B cell (primary cell): ENCODE measurements at regions of chr10 and their contacts with region 1.

Region 1: GRCh38 chr10:14822879-14823755 is 14.7 kb downstream of the CDNF start:
- DNase-seq: peak; percentile 69
- ATAC-seq: peak; percentile 78
- H3K4me3 ChIP-seq: no peak overlapping the region
- H3K4me3 Mint-ChIP-seq: no peak overlapping the region
- H3K27ac ChIP-seq: no peak overlapping the region
- H3K27ac Mint-ChIP-seq: no peak overlapping the region
- H3K4me1 ChIP-seq: peaks cover 16 to 19% of the 10 kb centered on the region in 2 donors
- H3K4me1 Mint-ChIP-seq: peaks cover 32% of the 10 kb centered on the region
- H3K27me3 ChIP-seq: no peaks in the 10 kb centered on the region
- H3K27me3 Mint-ChIP-seq: no peaks in the 10 kb centered on the region
- CTCF ChIP-seq: peak; percentile 83

Region 2: GRCh38 chr10:14536241-14537213 is 286.6 kb before region 1 on chr10:
- CTCF ChIA-PET with region 1: interaction called, 71 read pairs
- POLR2A ChIA-PET with region 1: no interaction called
- intact Hi-C with region 1: loop called (anchors 1 kb)
- DNase-seq: peak; percentile 62
- ATAC-seq: no peak
- H3K4me3 ChIP-seq: no peak overlapping the region
- H3K4me3 Mint-ChIP-seq: no peak overlapping the region
- H3K27ac ChIP-seq: peak overlapping the region in 1 of 2 donors; percentile 48
- H3K27ac Mint-ChIP-seq: no peak overlapping the region
- H3K4me1 ChIP-seq: peaks cover 0 to 10% of the 10 kb centered on the region in 2 donors
- H3K4me1 Mint-ChIP-seq: peaks cover 59% of the 10 kb centered on the region
- H3K27me3 ChIP-seq: no peaks in the 10 kb centered on the region
- H3K27me3 Mint-ChIP-seq: no peaks in the 10 kb centered on the region
- CTCF ChIP-seq: peak; percentile 76

Region 3: GRCh38 chr10:14556285-14556956 is 266.7 kb before region 1 on chr10:
- CTCF ChIA-PET with region 1: interaction called, 12 read pairs
- POLR2A ChIA-PET with region 1: no interaction called
- intact Hi-C with region 1: no loop called
- DNase-seq: peak; percentile 68
- ATAC-seq: peak; percentile 60
- H3K4me3 ChIP-seq: peak overlapping the region in 1 of 5 experiments; percentile 5
- H3K4me3 Mint-ChIP-seq: peak overlapping the region; percentile 79
- H3K27ac ChIP-seq: peak overlapping the region; percentile 54 to 70
- H3K27ac Mint-ChIP-seq: peak overlapping the region; percentile 92
- H3K4me1 ChIP-seq: peaks cover 82 to 84% of the 10 kb centered on the region in 2 donors
- H3K4me1 Mint-ChIP-seq: peaks cover 92% of the 10 kb centered on the region
- H3K27me3 ChIP-seq: no peaks in the 10 kb centered on the region
- H3K27me3 Mint-ChIP-seq: no peaks in the 10 kb centered on the region
- CTCF ChIP-seq: peak; percentile 43

Region 4: GRCh38 chr10:14736600-14737081 is 86.5 kb before region 1 on chr10:
- CTCF ChIA-PET with region 1: interaction called, 21 read pairs
- POLR2A ChIA-PET with region 1: no interaction called
- intact Hi-C with region 1: no loop called
- DNase-seq: peak; percentile 76
- ATAC-seq: peak; percentile 78
- H3K4me3 ChIP-seq: peak overlapping the region in 1 of 5 experiments; percentile 6
- H3K4me3 Mint-ChIP-seq: peak overlapping the region; percentile 73
- H3K27ac ChIP-seq: peak overlapping the region; percentile 84
- H3K27ac Mint-ChIP-seq: peak overlapping the region; percentile 95
- H3K4me1 ChIP-seq: peaks cover 64 to 70% of the 10 kb centered on the region in 2 donors
- H3K4me1 Mint-ChIP-seq: peaks cover 68% of the 10 kb centered on the region
- H3K27me3 ChIP-seq: no peaks in the 10 kb centered on the region
- H3K27me3 Mint-ChIP-seq: no peaks in the 10 kb centered on the region
- CTCF ChIP-seq: no peak

Region 5: DNA sequence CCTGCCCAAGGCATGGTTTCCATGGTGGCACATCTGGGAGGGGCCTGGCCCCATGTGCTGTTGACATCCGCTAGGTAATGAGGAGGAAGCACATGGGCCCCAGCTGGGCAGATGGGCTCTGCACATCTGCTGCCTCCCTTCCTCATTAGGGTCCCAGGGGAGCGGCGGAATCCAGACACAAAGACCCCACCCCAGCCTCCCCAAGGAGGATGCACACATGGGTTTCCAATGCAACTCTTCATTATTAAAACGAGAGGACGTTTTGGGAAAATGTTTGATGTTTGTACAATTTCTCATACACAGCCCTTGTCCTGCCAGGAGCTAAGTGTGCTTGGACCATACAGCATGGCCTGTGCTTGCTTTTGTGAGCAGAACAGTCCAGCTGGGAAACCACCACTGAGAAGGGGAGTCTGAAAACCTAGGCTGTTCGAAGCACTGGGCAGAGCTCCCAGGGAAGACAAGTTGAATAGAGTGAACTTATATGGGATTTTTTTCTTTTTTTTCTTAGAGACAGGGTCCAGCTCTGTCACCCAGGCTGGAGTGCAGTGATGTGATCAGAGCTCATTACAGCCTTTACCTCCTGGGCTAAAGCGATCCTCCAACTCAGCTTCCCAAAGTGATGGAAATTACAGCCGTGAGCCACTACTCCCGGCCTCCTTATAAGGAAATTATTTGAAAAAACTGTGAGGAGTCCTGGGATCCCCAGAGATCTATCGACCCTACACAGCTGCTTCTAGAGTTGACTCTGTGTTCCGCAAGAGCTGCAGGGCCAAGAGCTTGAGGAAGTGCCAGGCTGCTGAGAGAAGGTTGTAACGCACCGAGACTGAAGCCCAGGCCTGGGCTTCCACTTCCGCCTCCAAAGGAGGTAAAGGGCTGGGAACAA is 71.9 kb before region 1 on chr10:
- CTCF ChIA-PET with region 1: interaction called, 9 read pairs
- POLR2A ChIA-PET with region 1: no interaction called
- intact Hi-C with region 1: loop called (anchors 2 kb)
- DNase-seq: peak; percentile 85
- ATAC-seq: peak; percentile 80
- H3K4me3 ChIP-seq: peak overlapping the region in 3 of 5 experiments; percentile 6 to 30 (median 13)
- H3K4me3 Mint-ChIP-seq: peak overlapping the region; percentile 81
- H3K27ac ChIP-seq: peak overlapping the region; percentile 84 to 96
- H3K27ac Mint-ChIP-seq: peak overlapping the region; percentile 98
- H3K4me1 ChIP-seq: peaks cover 48 to 58% of the 10 kb centered on the region in 2 donors
- H3K4me1 Mint-ChIP-seq: peaks cover 62% of the 10 kb centered on the region
- H3K27me3 ChIP-seq: no peaks in the 10 kb centered on the region
- H3K27me3 Mint-ChIP-seq: no peaks in the 10 kb centered on the region
- CTCF ChIP-seq: no peak